ENCODE measurements at regions of chr4 and their contacts with region 1.

Region 1: DNA sequence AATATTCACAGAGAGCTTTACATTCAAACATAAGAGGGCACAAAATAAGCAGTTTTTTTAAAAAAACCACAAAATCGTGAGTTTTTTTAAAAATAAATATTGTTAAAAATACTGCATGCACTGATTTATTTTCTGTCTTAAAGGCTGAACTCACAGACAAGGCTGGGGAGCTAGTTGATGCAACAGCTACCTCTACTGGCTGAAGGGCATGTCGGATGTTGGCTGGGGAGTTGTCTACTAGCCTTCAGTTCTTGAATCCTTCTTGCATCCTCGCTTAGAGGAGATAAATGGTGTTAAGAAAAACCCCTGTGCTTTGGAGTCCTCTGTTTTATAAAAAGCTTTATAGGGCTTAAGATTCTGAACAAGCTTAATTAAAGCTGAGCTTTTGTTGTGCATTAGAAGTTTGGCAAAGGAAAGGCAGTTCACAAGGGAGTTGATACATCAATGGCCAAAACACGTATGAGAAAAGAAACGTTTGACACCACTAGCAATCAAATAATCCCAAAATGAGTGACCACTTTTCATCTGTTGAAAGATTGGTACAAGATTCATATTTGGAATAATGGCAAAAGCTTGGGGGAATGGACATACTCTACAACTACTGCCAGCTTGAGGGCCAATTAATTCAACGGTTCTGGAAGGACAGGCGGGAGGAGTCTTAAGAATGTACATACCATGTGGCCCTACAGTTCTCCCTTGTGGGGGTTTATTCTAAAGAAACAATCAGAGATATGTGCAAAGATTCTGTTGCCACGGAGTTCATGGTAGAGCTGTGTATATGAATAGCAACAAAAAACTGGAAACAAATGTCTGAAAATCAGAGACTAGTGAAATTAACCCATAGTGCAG is 94.7 kb downstream of the SEL1L3 start:
- DNase-seq: no peak
- CTCF ChIP-seq: peak; percentile 49

Region 2: DNA sequence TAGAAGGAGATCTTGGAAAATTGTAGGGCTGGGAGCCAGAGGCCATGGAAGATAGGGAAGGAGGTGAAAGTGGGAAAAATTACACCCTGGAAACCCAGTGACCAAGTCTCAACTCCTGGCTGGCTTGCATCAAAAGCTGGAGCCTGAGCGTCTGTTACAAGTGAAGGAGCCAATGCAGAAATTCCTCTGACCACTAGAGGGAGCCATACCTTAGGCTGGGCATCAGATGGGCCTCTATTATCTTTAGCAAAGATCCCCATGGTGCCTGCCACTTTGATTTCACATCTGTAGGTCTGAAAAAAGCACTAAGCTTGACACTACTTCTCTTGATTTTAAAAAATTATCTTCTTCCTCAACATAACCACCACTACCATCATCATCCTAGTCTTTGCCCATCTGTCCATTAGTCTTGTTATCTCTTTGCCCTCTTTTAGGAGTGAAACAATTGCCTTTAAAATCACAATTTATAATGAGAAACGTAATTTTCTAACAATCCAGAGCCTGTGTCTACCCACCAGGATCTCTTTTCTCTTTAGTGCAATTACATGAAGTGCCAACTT is 328.1 kb before region 1 on chr4:
- in situ Hi-C with region 1: loop called (anchors 25 kb)
- DNase-seq: peak; percentile 80
- CTCF ChIP-seq: peak; percentile 87

Region 3: GRCh38 chr4:26267087-26267486 is 499.0 kb after region 1 on chr4:
- in situ Hi-C with region 1: no loop called
- DNase-seq: no peak
- CTCF ChIP-seq: no peak